ENCODE measurements at regions of chr17 and their contacts with region 1.

Region 1: DNA sequence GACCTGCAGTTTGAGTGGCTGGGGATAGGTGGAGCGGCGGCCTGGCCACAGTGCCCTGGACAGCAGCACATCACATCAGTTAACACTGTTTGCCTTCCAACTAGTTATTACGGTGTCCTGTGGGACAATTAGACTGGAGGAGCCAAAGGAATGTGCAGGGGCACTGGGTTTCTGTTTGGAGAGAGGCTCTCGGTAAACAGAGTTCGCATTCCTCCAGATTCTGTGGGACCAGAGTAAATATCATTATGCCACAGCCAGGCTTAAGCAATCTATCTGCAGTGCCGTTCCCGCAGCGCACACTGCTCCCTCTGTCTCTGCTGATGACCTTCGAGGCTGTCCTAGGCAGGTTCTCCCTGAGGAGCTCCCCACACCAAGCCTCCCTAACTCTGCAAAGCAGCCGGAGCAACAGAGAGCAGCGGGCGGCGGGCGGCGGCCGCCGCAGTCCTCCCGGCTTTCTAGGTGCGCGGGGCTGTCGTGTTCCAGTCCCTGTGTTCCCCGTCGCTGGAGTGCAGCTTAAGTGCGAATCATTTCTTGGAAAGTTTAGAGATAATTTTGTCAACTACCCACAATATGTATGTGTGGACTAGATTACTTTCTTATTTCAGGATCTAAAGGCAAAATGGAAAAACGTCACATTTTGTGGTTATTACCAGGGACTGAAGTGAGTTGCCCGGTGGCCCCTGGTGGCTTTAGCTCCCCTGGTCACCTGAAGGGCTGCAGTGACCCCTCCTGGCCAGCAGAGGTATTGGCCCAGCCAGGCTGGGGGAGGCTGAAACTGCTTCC is 43.2 kb downstream of the PGS1 start:
- DNase-seq: peak; percentile 56 to 85 (median 72)
- ATAC-seq: peak; percentile 97
- H3K4me3 ChIP-seq: no peak overlapping the region
- H3K4me3 Mint-ChIP-seq: no peak overlapping the region
- H3K27ac ChIP-seq: no peak overlapping the region
- H3K27ac Mint-ChIP-seq: peak overlapping the region; percentile 37
- H3K4me1 ChIP-seq: peaks cover 18% of the 10 kb centered on the region
- H3K4me1 Mint-ChIP-seq: peaks cover 31% of the 10 kb centered on the region
- H3K27me3 ChIP-seq: no peaks in the 10 kb centered on the region
- H3K27me3 Mint-ChIP-seq: no peaks in the 10 kb centered on the region
- CTCF ChIP-seq: peak; percentile 98

Region 2: GRCh38 chr17:78082988-78083387 is 338.7 kb before region 1 on chr17:
- CTCF ChIA-PET with region 1: interaction called, 10 read pairs
- POLR2A ChIA-PET with region 1: no interaction called
- intact Hi-C with region 1: loop called (anchors 1 to 10 kb)
- DNase-seq: no peak
- ATAC-seq: no peak
- H3K4me3 ChIP-seq: no peak overlapping the region
- H3K4me3 Mint-ChIP-seq: no peak overlapping the region
- H3K27ac ChIP-seq: no peak overlapping the region
- H3K27ac Mint-ChIP-seq: no peak overlapping the region
- H3K4me1 ChIP-seq: no peaks in the 10 kb centered on the region
- H3K4me1 Mint-ChIP-seq: no peaks in the 10 kb centered on the region
- H3K27me3 ChIP-seq: no peaks in the 10 kb centered on the region
- H3K27me3 Mint-ChIP-seq: no peaks in the 10 kb centered on the region
- CTCF ChIP-seq: no peak

Region 3: DNA sequence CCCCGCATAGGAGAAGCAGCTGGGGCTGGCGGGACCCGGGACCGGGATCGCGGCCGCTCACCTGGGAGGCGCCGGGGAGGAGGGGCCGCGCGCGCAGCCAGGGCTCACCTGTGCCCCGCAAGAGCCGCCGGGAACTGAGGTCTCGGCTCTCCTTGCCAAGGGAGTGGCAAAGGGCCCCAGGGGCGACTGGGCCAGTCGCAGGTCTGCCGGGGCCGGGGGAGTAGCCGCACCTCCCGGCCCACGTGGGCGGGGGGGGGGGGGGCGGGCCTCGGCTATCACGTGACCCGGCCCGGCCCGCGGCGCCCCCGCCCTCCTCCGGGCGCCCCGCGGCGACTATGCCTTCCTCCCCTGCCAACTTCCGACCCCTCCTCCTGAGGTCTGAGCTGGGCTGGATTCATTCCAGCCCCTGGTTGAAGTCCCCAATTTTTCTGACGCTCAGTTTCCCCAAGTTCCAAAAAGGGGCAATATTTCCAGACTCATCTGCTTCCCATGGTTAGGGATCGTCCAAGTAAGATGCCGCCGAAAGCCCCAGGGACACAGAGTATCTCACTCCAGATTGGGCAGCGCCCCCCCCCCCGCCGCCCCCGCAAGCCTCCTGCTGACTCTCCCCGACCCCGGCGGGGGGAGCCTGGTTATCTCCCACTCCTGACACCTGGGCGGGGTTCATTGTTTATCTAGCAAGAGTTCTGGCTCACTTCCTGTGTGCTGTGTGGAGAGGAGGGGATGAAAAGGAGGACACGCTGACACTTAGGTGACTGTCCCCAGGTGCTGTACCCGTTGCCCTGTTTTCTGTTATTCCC is 292.9 kb before region 1 on chr17 and contains the start of gene TMC6:
- CTCF ChIA-PET with region 1: no interaction called
- POLR2A ChIA-PET with region 1: interaction called, 3 read pairs
- intact Hi-C with region 1: loop called in 1 of 2 experiments (anchors 10 kb)
- DNase-seq: peak; percentile 58 to 89 (median 75)
- ATAC-seq: peak; percentile 43
- H3K4me3 ChIP-seq: peak within 1 kb of the TSS; percentile 94
- H3K4me3 Mint-ChIP-seq: peak within 1 kb of the TSS; percentile 100
- H3K27ac ChIP-seq: peak within 1 kb of the TSS; percentile 75 to 92
- H3K27ac Mint-ChIP-seq: peak within 1 kb of the TSS; percentile 96
- H3K4me1 ChIP-seq: peaks cover 76% of the 10 kb centered on the region
- H3K4me1 Mint-ChIP-seq: peaks cover 56% of the 10 kb centered on the region
- H3K27me3 ChIP-seq: no peaks in the 10 kb centered on the region
- H3K27me3 Mint-ChIP-seq: no peaks in the 10 kb centered on the region
- CTCF ChIP-seq: no peak
- total RNA-seq, gene TMC6: 645 to 659 TPM

Region 4: GRCh38 chr17:78289802-78290363 is 131.8 kb before region 1 on chr17:
- CTCF ChIA-PET with region 1: interaction called, 18 read pairs
- POLR2A ChIA-PET with region 1: no interaction called
- intact Hi-C with region 1: loop called (anchors 1 kb)
- DNase-seq: peak; percentile 62 to 91 (median 72)
- ATAC-seq: peak; percentile 98
- H3K4me3 ChIP-seq: no peak overlapping the region
- H3K4me3 Mint-ChIP-seq: no peak overlapping the region
- H3K27ac ChIP-seq: no peak overlapping the region
- H3K27ac Mint-ChIP-seq: no peak overlapping the region
- H3K4me1 ChIP-seq: peaks cover 16% of the 10 kb centered on the region
- H3K4me1 Mint-ChIP-seq: no peaks in the 10 kb centered on the region
- H3K27me3 ChIP-seq: no peaks in the 10 kb centered on the region
- H3K27me3 Mint-ChIP-seq: no peaks in the 10 kb centered on the region
- CTCF ChIP-seq: peak; percentile 77

Region 5: GRCh38 chr17:78318843-78319242 is 102.8 kb before region 1 on chr17:
- CTCF ChIA-PET with region 1: no interaction called
- POLR2A ChIA-PET with region 1: no interaction called
- intact Hi-C with region 1: no loop called
- DNase-seq: no peak
- ATAC-seq: no peak
- H3K4me3 ChIP-seq: no peak overlapping the region
- H3K4me3 Mint-ChIP-seq: no peak overlapping the region
- H3K27ac ChIP-seq: no peak overlapping the region
- H3K27ac Mint-ChIP-seq: no peak overlapping the region
- H3K4me1 ChIP-seq: peaks cover 52% of the 10 kb centered on the region
- H3K4me1 Mint-ChIP-seq: peaks cover 40% of the 10 kb centered on the region
- H3K27me3 ChIP-seq: no peaks in the 10 kb centered on the region
- H3K27me3 Mint-ChIP-seq: no peaks in the 10 kb centered on the region
- CTCF ChIP-seq: no peak

Region 6: GRCh38 chr17:78383725-78384471 is 37.8 kb before region 1 on chr17:
- CTCF ChIA-PET with region 1: interaction called, 17 read pairs
- POLR2A ChIA-PET with region 1: interaction called, 3 read pairs
- intact Hi-C with region 1: loop called (anchors 5 kb)
- DNase-seq: peak in 8 of 14 experiments; percentile 16 to 76 (median 49)
- ATAC-seq: no peak
- H3K4me3 ChIP-seq: no peak overlapping the region
- H3K4me3 Mint-ChIP-seq: peak overlapping the region; percentile 79
- H3K27ac ChIP-seq: peak overlapping the region; percentile 35 to 48
- H3K27ac Mint-ChIP-seq: peak overlapping the region; percentile 75
- H3K4me1 ChIP-seq: peaks cover 94% of the 10 kb centered on the region
- H3K4me1 Mint-ChIP-seq: peaks cover 80% of the 10 kb centered on the region
- H3K27me3 ChIP-seq: no peaks in the 10 kb centered on the region
- H3K27me3 Mint-ChIP-seq: no peaks in the 10 kb centered on the region
- CTCF ChIP-seq: no peak

Measured in CD4-positive, alpha-beta T cell (primary cell).